ENCODE measurements at regions of chr10 and their contacts with region 1.

Region 1: DNA sequence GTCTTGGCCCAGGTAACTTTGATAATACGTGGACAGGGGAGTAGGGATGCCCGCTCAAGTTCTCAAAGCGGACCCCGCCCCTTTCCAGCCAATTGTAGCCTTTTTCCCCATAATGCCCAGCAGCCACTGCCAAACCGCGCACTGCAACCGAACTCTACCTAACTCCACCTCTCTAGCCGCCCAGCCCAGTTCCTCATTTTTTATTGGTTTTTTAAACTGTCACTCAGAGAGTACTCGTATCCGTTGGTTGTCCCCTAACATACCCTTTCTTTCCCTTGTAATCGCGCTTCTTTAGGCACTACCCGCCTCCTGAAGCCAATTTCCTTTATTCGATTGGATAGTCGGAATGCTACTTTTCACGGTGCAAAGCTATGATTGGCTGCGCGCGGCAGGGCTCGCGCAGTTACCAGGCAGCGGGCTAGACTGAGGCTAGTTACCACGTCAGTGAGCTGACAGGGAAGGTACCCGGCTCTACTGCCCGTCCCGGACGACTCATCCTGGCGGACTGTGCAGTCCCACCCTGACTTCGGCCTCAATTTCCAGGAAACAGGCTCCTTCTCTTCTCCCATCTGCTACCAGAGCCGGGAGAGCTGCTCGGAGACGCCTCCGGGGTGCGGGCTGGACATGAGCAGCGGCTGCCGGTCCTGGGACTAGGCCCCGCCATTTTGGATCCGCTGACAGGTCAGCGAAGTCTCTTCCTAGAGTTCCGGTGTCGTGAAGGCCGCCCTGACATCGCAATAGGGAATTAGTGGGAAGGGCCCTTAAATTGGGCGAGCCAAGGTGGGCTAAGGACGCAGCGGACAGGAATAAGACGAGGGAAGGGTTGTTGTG is at the start of gene GBF1:
- DNase-seq: peak; percentile 88 to 90
- H3K4me3 ChIP-seq: peak within 1 kb of the TSS; percentile 86 to 98 (median 92)
- H3K27ac ChIP-seq: peak within 1 kb of the TSS; percentile 43; the same call in 1 of the 2 replicates
- H3K4me1 ChIP-seq: peaks cover 4 to 16% (median 7%) of the 10 kb centered on the region in 4 experiments
- H3K27me3 ChIP-seq: peaks cover 20 to 32% (median 25%) of the 10 kb centered on the region in 4 experiments
- CTCF ChIP-seq: no peak
- EP300 ChIP-seq: no peak
- POLR2A ChIP-seq: peak in 1 of 2 experiments; percentile 78; a peak in 2 of 3 replicates
- RAD21 ChIP-seq: no peak
- total RNA-seq, gene GBF1: 24.4 and 25.5 TPM in 2 replicates

Region 2: DNA sequence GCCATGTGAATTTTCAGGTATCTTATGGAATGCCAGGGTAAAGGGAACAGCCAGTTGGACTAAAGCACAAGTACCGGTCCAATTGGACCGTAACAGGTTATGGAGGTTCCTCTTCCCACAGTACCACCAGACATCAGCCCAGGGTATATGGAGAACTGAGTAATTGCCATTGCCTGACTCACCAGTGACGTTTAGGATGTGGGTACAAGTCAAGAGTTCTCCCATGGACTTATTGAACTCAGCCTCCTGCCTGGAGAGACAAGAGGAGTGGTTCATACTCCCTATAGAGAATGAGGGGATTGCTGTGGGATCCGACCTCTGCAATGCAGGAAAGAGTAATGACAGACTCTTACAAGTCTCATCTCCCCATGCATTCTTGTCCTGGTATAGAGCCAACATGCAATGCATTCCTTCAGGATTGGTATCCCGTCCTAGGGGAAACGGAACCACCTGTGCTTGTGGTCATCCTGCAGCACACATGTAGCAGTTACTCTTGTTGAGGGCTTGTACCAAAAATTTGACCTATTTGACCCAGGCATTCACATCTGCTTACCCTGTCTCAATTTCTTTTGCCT is 49.9 kb before region 1 on chr10:
- CTCF ChIA-PET with region 1: no interaction called
- POLR2A ChIA-PET with region 1: no interaction called
- DNase-seq: no peak
- H3K4me3 ChIP-seq: no peak overlapping the region
- H3K27ac ChIP-seq: no peak overlapping the region
- H3K4me1 ChIP-seq: no peaks in the 10 kb centered on the region
- H3K27me3 ChIP-seq: no peaks in the 10 kb centered on the region; a peak in 1 of 7 replicates
- CTCF ChIP-seq: no peak
- EP300 ChIP-seq: no peak
- POLR2A ChIP-seq: no peak
- RAD21 ChIP-seq: no peak

Region 3: GRCh38 chr10:102231357-102232318 is 13.7 kb before region 1 on chr10:
- CTCF ChIA-PET with region 1: interaction called, 54 read pairs
- POLR2A ChIA-PET with region 1: interaction called, 15 read pairs
- DNase-seq: peak in 1 of 2 experiments; percentile 94
- H3K4me3 ChIP-seq: peak overlapping the region; percentile 33 to 67 (median 41)
- H3K27ac ChIP-seq: no peak overlapping the region
- H3K4me1 ChIP-seq: peaks cover 0 to 16% (median 1%) of the 10 kb centered on the region in 4 experiments; a peak in 2 of 7 replicates
- H3K27me3 ChIP-seq: peaks cover 33 to 93% (median 80%) of the 10 kb centered on the region in 4 experiments
- CTCF ChIP-seq: peak; percentile 91 to 92 (median 92)
- EP300 ChIP-seq: no peak
- POLR2A ChIP-seq: no peak
- RAD21 ChIP-seq: peak; percentile 69 to 83

Region 4: GRCh38 chr10:102342958-102343357 is 97.6 kb after region 1 on chr10:
- CTCF ChIA-PET with region 1: interaction called, 862 read pairs
- POLR2A ChIA-PET with region 1: no interaction called
- DNase-seq: no peak
- H3K4me3 ChIP-seq: peak overlapping the region in 1 of 4 experiments; percentile 19; a peak in 1 of 8 replicates
- H3K27ac ChIP-seq: no peak overlapping the region
- H3K4me1 ChIP-seq: peaks cover 0 to 8% (median 4%) of the 10 kb centered on the region in 4 experiments; a peak in 5 of 7 replicates
- H3K27me3 ChIP-seq: peaks cover 25 to 50% (median 44%) of the 10 kb centered on the region in 4 experiments
- CTCF ChIP-seq: no peak
- EP300 ChIP-seq: no peak
- POLR2A ChIP-seq: no peak
- RAD21 ChIP-seq: no peak

Region 5: DNA sequence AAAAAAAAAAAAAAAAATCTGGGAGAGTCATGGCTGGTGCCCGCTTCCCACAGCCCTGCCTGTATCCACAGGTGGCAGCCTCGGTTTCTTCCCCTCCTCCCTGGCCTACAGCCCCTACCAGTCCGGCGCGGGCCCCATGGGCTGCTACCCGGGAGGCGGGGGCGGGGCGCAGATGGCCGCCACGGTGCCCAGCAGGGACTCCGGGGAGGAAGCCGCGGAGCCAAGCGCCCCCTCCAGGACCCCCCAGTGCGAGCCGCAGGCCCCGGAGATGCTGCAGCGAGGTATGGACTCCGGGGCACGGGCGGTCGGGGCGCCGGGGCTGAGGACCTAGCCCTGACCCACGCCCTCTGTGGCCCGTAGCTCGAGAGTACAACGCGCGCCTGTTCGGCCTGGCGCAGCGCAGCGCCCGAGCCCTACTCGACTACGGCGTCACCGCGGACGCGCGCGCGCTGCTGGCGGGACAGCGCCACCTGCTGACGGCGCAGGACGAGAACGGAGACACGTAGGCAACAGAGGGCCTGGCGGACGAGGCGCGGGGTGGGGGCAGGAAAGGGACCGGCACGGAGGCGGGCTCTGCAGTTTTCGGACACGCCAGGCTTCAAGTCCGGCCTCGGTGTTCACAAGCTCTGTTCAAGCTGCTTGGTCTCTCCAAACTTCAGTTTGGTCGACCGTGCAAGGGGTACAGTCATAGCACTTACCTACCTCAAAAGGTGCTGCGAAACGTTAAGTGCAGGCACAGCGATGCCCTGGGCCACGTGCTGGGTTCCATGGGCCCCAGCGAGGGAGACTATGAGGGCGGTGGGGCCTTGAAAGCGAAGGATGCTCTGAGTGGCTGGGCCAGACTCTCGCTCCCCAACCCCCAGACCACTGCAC is 154.1 kb after region 1 on chr10:
- CTCF ChIA-PET with region 1: interaction called, 10 read pairs
- POLR2A ChIA-PET with region 1: interaction called, 3 read pairs
- DNase-seq: peak; percentile 70 to 96
- H3K4me3 ChIP-seq: peak overlapping the region; percentile 33 to 70 (median 60)
- H3K27ac ChIP-seq: no peak overlapping the region
- H3K4me1 ChIP-seq: peaks cover 0 to 22% (median 13%) of the 10 kb centered on the region in 4 experiments; a peak in 6 of 7 replicates
- H3K27me3 ChIP-seq: peaks cover 0 to 14% (median 10%) of the 10 kb centered on the region in 4 experiments; a peak in 6 of 7 replicates
- CTCF ChIP-seq: peak in 2 of 3 experiments; percentile 96; a peak in 3 of 4 replicates
- EP300 ChIP-seq: peak in 1 of 2 experiments; percentile 35; a peak in 1 of 3 replicates
- POLR2A ChIP-seq: peak in 1 of 2 experiments; percentile 73; a peak in 2 of 3 replicates
- RAD21 ChIP-seq: peak; percentile 63 to 75

Measured in H1 (cell line).